Tibial artery (tissue), 4 donors: ENCODE measurements at regions of chr3 and their contacts with region 1.

Region 1: DNA sequence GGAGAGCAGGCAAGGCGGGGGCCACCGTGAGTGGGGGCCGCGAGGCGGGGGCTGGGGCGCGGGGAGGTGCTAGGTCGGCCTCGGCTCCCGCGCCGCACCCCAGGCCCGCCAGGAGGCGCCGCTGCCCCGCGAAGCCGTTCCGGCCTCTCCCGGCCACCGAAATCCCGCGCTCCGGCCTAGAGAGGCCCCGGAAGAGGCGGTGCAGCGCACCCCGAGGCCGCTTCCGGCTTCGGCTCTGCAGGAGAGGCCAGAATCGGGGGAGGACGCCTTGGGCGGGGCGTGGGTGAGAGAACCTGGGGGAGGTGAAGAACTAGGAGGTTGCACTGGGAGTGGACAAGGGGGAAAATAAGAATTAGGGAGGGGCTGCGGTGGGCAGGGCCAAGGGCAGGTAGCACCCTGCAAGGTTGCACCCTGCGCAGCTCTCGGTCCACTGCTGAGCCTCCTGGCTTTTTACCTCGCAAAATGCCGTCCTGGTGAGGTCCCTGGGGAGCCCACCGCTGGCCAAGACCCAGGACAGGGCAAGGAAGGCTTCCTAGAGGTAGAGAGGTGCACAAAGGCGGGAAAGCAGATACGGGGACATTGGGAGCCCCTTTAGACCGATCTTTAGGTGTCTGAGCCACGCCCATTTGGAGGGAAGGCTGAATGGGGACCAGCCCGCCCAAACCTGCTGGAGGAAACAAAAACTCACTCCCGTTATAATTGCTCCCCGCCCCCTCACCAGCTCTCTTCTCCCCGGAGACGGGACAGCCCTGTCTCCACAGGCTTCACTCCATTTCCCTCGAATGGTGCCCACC is 8.4 kb upstream of the GNAI2 start:
- DNase-seq: peak; percentile 87 to 95
- H3K4me3 ChIP-seq: peak overlapping the region; percentile 67 to 69
- H3K27ac ChIP-seq: peak overlapping the region; percentile 39 to 61
- H3K4me1 ChIP-seq: peaks cover 0 to 32% (median 18%) of the 10 kb centered on the region in 4 donors
- H3K27me3 ChIP-seq: peaks cover 0 to 4% of the 10 kb centered on the region in 2 donors
- CTCF ChIP-seq: peak; percentile 91

Region 2: GRCh38 chr3:50245831-50246516 is 18.4 kb after region 1 on chr3:
- intact Hi-C with region 1: loop called (anchors 1 kb)
- DNase-seq: peak; percentile 92 to 94
- H3K4me3 ChIP-seq: peak overlapping the region; percentile 39 to 49
- H3K27ac ChIP-seq: peak overlapping the region; percentile 63 to 86
- H3K4me1 ChIP-seq: peaks cover 0 to 100% (median 92%) of the 10 kb centered on the region in 4 donors
- H3K27me3 ChIP-seq: no peaks in the 10 kb centered on the region
- CTCF ChIP-seq: peak; percentile 95 to 97

Region 3: DNA sequence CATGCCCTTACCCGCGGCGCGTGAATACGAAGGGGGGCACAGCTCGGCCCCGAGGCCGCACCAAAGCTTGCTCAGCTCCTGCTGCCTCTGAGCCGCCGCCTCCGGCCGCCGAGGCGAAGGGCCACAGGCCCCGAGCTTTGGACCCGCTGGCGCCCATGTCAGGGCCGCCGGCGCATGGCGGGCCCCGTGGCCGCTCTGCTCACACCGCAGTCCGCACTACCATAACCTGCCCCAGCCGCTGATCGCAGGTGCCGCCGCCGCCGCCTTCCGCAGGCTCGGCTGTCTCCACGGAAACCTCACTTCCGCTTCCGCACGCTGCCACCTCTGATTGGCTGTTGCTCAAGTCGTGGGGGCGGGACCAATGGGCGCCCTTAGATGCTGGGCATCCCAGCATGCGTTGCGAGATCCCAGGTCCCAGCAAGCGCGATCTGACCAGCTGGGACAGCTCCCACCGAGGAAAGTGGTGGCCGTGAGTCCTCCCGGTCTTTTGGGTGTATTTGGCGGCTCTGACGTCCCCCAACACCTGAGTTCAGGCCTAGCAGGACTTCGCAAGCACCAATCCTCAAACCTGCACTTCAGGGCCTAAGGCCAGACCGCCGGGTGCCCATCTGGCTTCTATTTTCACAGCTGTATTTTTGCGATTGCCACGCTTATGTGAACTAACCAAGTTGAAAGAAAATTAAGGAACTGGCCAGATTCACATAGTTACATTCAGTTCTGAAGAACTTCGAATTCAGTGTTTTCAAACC is 100.5 kb after region 1 on chr3 and contains the start of gene TUSC2:
- intact Hi-C with region 1: no loop called
- DNase-seq: peak; percentile 98 to 99
- H3K4me3 ChIP-seq: peak within 1 kb of the TSS; percentile 92 to 100
- H3K27ac ChIP-seq: peak within 1 kb of the TSS; percentile 88 to 95
- H3K4me1 ChIP-seq: peaks cover 0 to 32% (median 20%) of the 10 kb centered on the region in 4 donors
- H3K27me3 ChIP-seq: no peaks in the 10 kb centered on the region
- CTCF ChIP-seq: no peak